Activated CD4-positive, alpha-beta T cell treated with anti-CD3 and anti-CD28 coated beads for 36 hours (primary cell): ENCODE measurements at regions of chr12 and their contacts with region 1.

Region 1: DNA sequence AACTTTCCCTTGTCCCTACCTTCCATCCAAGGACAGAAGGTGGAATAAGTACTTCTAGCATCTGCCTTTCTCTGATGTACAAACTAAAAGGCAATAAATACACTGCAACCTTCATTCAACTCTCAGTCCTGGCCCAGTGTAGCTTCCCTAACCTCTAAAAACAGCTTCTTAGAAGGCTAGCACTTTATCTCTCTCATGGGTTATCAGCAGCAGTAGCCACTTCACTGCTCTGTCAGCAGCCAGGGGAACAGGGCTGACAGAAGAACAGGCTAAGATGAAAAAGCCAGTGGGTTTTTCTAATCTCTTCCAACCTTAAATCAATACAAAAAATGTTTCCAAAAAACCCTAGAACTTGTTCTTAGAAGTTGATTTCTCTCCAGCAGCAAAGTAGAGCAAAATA is 13.2 kb downstream of the BAZ2A start:
- DNase-seq: no peak
- ATAC-seq: no peak
- H3K4me3 Mint-ChIP-seq: no peak overlapping the region
- H3K27ac Mint-ChIP-seq: peak overlapping the region; percentile 53
- H3K4me1 Mint-ChIP-seq: peaks cover 14% of the 10 kb centered on the region
- H3K27me3 Mint-ChIP-seq: no peaks in the 10 kb centered on the region

Region 2: GRCh38 chr12:55738123-55739024 is 878.6 kb before region 1 on chr12:
- CTCF ChIA-PET with region 1: no interaction called
- POLR2A ChIA-PET with region 1: no interaction called
- intact Hi-C with region 1: no loop called
- DNase-seq: peak; percentile 88
- ATAC-seq: peak; percentile 82
- H3K4me3 Mint-ChIP-seq: peak overlapping the region; percentile 68
- H3K27ac Mint-ChIP-seq: peak overlapping the region; percentile 76
- H3K4me1 Mint-ChIP-seq: peaks cover 23% of the 10 kb centered on the region
- H3K27me3 Mint-ChIP-seq: no peaks in the 10 kb centered on the region

Region 3: DNA sequence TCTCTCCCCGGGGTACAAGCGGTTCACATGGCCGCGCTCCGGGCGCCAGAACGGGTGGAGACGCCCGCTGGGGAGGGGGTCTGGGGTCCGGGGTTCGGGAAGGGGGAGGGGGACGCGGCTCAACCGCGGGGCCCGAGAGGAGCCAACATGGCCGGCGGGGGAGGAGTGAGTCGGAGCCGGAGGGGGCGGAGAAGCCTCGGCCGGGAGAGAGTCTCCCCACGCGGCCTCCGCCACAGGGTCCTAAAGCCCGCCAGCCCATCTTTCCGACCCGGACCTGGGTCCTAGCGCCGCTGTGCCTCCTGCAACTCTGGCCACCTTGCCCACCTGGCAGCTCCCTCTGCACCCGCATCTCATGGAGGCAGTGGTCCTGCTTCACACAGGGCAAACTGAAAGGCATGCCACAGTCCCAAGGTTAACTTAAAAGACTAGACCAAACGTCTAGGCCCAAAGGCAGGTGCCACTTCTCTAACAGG is 13.3 kb after region 1 on chr12 and contains the start of gene BAZ2A:
- CTCF ChIA-PET with region 1: interaction called, 11 read pairs
- POLR2A ChIA-PET with region 1: no interaction called
- intact Hi-C with region 1: no loop called
- DNase-seq: peak; percentile 94
- ATAC-seq: peak; percentile 69
- H3K4me3 Mint-ChIP-seq: peak within 1 kb of the TSS; percentile 96
- H3K27ac Mint-ChIP-seq: peak within 1 kb of the TSS; percentile 93
- H3K4me1 Mint-ChIP-seq: peaks cover 75% of the 10 kb centered on the region
- H3K27me3 Mint-ChIP-seq: no peaks in the 10 kb centered on the region
- total RNA-seq, gene BAZ2A: 79.4 to 129 TPM